Mucosa of descending colon (tissue), 3 donors: ENCODE measurements at regions of chr2 and their contacts with region 1.

Region 1: DNA sequence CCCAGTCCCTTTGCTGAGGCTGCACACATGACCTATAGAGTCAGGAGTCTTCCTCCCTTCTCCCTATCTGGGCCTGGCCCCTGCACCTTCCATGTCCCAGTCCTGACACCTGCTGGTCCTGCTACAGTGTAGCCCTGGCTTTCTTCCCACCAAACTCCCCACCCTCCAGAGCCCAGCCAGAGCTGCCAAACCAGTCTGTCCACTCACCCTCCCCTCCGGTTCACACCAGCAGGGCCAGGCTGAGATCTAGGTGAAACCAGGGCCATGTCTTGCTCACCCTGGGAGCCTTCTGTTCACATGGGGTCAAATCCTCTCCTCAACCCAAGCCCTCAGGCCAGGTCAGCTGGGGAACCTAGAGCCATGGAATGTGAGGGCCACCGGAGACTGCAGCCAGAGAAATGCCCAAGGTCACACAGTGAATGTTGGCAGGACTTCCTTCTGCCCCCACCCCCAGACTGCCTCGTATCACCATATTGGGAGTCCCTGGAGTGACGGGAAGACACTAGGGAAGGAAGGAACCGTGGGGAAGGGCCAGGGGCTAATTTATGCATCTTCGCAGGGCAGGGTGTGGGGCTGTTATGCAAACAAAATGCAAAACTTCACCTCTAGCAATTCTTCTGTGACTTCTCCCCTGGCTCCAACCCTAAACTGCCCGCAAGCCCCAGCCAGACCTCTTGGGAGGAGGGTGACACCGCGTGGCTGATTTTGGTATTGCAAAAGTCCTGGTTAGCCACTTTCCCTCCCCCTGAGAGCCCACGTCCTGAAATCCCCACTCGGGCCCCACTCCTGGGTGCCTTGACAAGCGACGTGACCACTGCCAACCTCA is 14.6 kb downstream of the TNS1 start:
- DNase-seq: peak; percentile 77 to 90 (median 86)
- ATAC-seq: peak; percentile 93
- H3K4me3 ChIP-seq: no peak overlapping the region
- H3K4me1 ChIP-seq: peaks cover 11% of the 10 kb centered on the region
- CTCF ChIP-seq: peak; percentile 74

Region 2: DNA sequence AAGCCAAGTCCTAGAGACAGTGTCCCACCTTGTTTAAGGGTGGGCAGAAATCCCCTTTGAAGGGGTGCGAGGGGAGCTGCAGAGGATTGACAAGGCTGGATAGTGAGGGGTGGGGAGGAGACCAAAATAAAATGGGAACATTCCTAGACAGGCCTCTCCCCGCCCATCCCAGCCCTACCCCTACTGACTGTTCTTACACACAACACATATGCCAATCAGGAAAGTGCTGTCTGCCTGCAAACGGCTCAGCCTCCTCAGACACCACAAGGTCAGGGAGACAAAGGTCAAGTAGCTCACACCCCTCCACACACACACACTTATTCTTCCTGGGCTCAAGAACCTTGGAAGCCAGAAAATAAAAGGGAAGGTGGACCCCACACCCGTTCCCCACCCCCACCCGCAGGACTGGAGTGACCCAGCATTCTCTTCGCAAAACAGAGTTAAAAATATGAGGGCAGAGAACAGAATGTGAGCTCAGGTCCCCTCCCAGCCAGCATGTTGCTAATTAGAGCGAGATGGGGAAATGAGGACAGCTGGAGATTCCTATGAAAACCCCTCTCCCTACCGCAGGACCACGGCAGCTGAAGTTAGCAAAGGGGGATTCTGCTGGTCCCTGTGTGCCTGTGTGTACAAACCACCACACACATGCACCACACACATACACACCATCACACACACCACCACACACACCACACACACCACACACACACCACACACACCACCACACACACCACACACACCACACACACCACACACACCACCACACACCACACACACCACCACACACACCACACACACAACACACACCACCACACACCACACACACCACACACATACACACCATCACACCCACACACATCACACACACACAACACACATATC is 183.2 kb before region 1 on chr2:
- intact Hi-C with region 1: loop called in 1 of 2 experiments (anchors 10 kb)
- DNase-seq: no peak
- ATAC-seq: peak; percentile 46
- H3K4me3 ChIP-seq: no peak overlapping the region
- H3K4me1 ChIP-seq: no peaks in the 10 kb centered on the region
- CTCF ChIP-seq: no peak

Region 3: DNA sequence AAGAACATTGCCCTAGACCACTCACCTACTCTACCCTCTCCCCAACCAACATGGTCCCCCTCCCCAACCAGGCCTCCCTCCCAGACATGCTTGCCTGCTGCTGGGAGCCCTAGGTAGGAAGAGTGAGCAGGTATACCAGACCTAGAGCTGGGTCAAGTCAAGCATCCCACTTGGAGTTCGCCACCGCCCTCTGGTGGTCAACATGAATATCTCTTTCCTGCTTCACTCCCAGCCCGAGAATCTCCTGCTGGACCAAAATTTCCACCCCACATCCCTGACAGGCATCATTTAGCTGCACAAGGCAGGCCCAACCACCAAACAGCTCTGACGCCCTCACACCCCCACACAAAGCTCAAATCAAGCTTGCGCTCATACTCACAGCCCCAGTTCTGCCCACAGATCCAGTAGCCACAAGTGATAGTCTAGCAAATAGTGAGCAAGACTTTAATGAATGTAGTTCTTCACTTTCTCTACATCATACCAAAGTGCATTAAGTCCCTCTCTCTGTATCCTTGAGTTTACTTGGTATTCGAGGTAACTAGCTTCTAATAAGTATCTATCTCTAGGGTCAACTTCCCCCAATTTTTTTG is 101.4 kb before region 1 on chr2:
- intact Hi-C with region 1: loop called in 1 of 2 experiments (anchors 10 kb)
- DNase-seq: peak in 2 of 3 donors; percentile 54 to 74
- ATAC-seq: peak; percentile 72
- H3K4me3 ChIP-seq: no peak overlapping the region
- H3K4me1 ChIP-seq: no peaks in the 10 kb centered on the region
- CTCF ChIP-seq: peak; percentile 29